ENCODE measurements at regions of chr6 and their contacts with region 1.

Region 1: DNA sequence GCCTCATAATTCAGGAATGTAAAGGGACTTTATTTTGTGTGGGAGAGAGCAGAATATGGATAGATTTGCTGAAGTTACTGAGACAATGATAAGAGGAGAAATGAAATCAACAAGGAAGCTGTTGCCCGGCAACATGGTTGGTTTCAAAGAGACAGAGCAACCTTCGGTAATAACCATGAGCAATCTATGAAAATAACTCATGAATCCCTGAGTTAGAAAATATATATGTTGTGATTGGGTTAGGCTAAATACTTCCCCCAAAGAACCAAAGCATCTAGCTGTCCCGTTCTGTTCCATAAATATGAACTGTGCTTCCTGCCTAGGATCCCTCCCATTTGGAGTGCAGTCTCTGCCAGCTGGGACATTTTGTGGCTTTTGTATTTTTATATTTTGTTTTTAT is 23.1 kb downstream of the SERPINB1 start:
- DNase-seq: no peak
- H3K4me3 Mint-ChIP-seq: no peak overlapping the region
- H3K27ac Mint-ChIP-seq: peak overlapping the region; percentile 90
- H3K4me1 Mint-ChIP-seq: peaks cover 28% of the 10 kb centered on the region
- H3K27me3 Mint-ChIP-seq: no peaks in the 10 kb centered on the region
- CTCF ChIP-seq: no peak

Region 2: GRCh38 chr6:2725999-2726567 is 92.5 kb before region 1 on chr6:
- CTCF ChIA-PET with region 1: no interaction called
- POLR2A ChIA-PET with region 1: no interaction called
- intact Hi-C with region 1: no loop called
- DNase-seq: no peak
- H3K4me3 Mint-ChIP-seq: no peak overlapping the region
- H3K27ac Mint-ChIP-seq: no peak overlapping the region
- H3K4me1 Mint-ChIP-seq: no peaks in the 10 kb centered on the region
- H3K27me3 Mint-ChIP-seq: no peaks in the 10 kb centered on the region
- CTCF ChIP-seq: no peak

Region 3: GRCh38 chr6:2738373-2738979 is 80.1 kb before region 1 on chr6:
- CTCF ChIA-PET with region 1: no interaction called
- POLR2A ChIA-PET with region 1: no interaction called
- intact Hi-C with region 1: no loop called
- DNase-seq: peak; percentile 52
- H3K4me3 Mint-ChIP-seq: no peak overlapping the region
- H3K27ac Mint-ChIP-seq: no peak overlapping the region
- H3K4me1 Mint-ChIP-seq: no peaks in the 10 kb centered on the region
- H3K27me3 Mint-ChIP-seq: no peaks in the 10 kb centered on the region
- CTCF ChIP-seq: peak; percentile 59

Region 4: GRCh38 chr6:2831392-2831791 is 12.8 kb after region 1 on chr6:
- CTCF ChIA-PET with region 1: interaction called, 3 read pairs
- POLR2A ChIA-PET with region 1: interaction called, 13 read pairs
- intact Hi-C with region 1: no loop called
- DNase-seq: no peak
- H3K4me3 Mint-ChIP-seq: no peak overlapping the region
- H3K27ac Mint-ChIP-seq: no peak overlapping the region
- H3K4me1 Mint-ChIP-seq: no peaks in the 10 kb centered on the region
- H3K27me3 Mint-ChIP-seq: no peaks in the 10 kb centered on the region
- CTCF ChIP-seq: no peak

Region 5: DNA sequence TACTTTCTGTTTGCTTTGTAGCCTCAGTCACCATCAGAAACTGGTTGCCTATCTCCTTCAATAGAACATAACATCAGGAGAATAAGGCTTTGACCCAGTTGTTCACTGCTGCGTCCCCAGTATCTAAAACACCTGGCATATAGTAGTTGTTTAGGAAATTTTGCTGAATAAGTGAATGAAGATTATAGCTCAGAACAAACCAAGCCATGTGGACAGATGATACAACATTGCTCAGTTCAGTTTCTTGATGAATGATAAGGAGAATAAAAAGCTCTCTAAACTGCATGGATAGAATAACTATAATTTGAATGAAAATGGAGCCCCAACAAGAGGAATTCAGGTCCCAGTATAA is 28.3 kb after region 1 on chr6:
- CTCF ChIA-PET with region 1: interaction called, 6 read pairs
- POLR2A ChIA-PET with region 1: interaction called, 76 read pairs
- intact Hi-C with region 1: no loop called
- DNase-seq: no peak
- H3K4me3 Mint-ChIP-seq: peak overlapping the region; percentile 54
- H3K27ac Mint-ChIP-seq: peak overlapping the region; percentile 71
- H3K4me1 Mint-ChIP-seq: peaks cover 19% of the 10 kb centered on the region
- H3K27me3 Mint-ChIP-seq: no peaks in the 10 kb centered on the region
- CTCF ChIP-seq: no peak

Region 6: GRCh38 chr6:3176562-3177355 is 358.2 kb after region 1 on chr6:
- CTCF ChIA-PET with region 1: no interaction called
- POLR2A ChIA-PET with region 1: no interaction called
- intact Hi-C with region 1: no loop called
- DNase-seq: peak; percentile 84
- H3K4me3 Mint-ChIP-seq: no peak overlapping the region
- H3K27ac Mint-ChIP-seq: no peak overlapping the region
- H3K4me1 Mint-ChIP-seq: no peaks in the 10 kb centered on the region
- H3K27me3 Mint-ChIP-seq: no peaks in the 10 kb centered on the region
- CTCF ChIP-seq: no peak